ENCODE measurements at regions of chr1 and their contacts with region 1.

Region 1: DNA sequence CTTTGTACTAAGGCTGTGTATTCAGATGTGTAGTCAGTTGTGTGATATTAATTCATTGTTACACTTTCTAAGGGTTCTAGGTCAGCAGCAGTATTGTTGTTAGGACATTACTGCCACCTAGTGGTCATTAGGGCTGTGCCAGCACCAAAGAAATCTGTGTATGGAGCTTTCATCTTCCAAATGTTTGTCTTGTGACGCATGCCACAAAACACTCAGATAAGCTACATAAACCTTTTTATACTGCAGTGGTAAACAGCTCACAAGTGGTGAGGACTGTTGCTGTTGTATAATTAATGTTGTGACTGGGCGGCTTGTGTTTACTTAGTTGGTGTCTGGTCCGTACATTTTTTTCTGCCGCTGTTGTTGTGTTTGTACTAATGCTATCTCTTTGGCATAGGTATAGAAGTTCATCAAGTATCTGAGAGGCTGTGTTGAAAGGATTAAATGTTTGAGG is 51.7 kb downstream of the S1PR1 start:
- DNase-seq: no peak
- H3K4me3 ChIP-seq: no peak overlapping the region
- H3K27ac ChIP-seq: no peak overlapping the region
- H3K4me1 ChIP-seq: peaks cover 4 to 8% (median 4%) of the 10 kb centered on the region in 4 donors
- H3K27me3 ChIP-seq: no peaks in the 10 kb centered on the region
- CTCF ChIP-seq: peak; percentile 80 to 93 (median 88)
- EP300 ChIP-seq: no peak
- POLR2A ChIP-seq: no peak

Region 2: DNA sequence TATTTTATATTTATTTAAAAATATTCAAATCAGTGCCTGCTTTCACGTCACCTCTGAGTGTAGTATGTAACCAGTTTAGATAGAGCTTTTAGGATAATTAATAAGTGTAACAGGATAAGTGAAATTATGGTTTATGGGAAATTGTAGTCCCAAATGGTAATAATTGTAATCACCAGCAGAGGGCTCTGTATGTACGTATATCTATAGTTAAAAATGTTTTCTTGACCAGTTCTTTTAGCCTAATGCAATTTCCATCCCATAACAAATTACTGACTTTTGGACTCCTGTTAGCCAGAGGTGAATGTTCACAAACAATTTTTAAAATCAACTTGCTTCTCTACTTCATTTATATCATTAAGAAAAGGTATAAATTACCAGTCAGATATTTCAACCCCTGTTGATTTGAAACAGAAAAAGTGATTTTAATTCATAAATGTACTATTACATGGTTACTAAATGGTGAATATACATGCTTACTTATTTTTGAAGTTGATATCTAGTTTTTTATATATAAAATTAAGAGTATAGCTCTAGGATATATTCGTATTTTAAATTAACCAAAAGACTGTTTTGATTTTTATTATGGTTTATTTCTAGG is 367.3 kb before region 1 on chr1:
- intact Hi-C with region 1: loop called (anchors 5 kb)
- DNase-seq: no peak
- H3K4me3 ChIP-seq: no peak overlapping the region
- H3K27ac ChIP-seq: no peak overlapping the region
- H3K4me1 ChIP-seq: no peaks in the 10 kb centered on the region
- H3K27me3 ChIP-seq: no peaks in the 10 kb centered on the region
- CTCF ChIP-seq: peak; percentile 72 to 76 (median 75)
- EP300 ChIP-seq: no peak
- POLR2A ChIP-seq: no peak

Region 3: DNA sequence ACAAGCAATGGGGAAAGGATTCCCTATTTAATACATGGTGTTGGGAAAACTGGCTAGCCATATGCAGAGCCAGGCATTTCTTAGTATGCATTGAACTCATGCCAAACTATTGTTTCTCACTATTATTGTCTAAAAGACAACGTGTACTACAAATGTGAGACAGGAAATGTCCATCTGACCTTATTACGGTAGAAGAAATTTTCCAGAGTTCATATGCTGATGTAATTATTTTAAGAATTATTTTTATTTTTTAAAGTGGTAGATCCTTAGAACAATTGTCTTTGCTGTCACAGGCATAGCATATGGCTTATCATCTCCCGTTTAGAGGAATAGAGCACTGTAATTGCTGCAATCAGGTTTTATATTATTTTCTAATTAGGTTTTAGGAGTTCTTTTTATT is 126.9 kb before region 1 on chr1:
- intact Hi-C with region 1: no loop called
- DNase-seq: no peak
- H3K4me3 ChIP-seq: no peak overlapping the region
- H3K27ac ChIP-seq: peak overlapping the region; percentile 29 to 45 (median 38)
- H3K4me1 ChIP-seq: peaks cover 0 to 19% (median 0%) of the 10 kb centered on the region in 4 donors
- H3K27me3 ChIP-seq: no peaks in the 10 kb centered on the region
- CTCF ChIP-seq: no peak
- EP300 ChIP-seq: no peak
- POLR2A ChIP-seq: no peak

Region 4: GRCh38 chr1:101216623-101217022 is 71.9 kb before region 1 on chr1:
- intact Hi-C with region 1: no loop called
- DNase-seq: no peak
- H3K4me3 ChIP-seq: no peak overlapping the region
- H3K27ac ChIP-seq: no peak overlapping the region
- H3K4me1 ChIP-seq: peaks cover 0 to 10% (median 4%) of the 10 kb centered on the region in 4 donors
- H3K27me3 ChIP-seq: no peaks in the 10 kb centered on the region
- CTCF ChIP-seq: no peak
- EP300 ChIP-seq: no peak
- POLR2A ChIP-seq: no peak

Region 5: GRCh38 chr1:101667761-101668160 is 379.2 kb after region 1 on chr1:
- intact Hi-C with region 1: no loop called
- DNase-seq: no peak
- H3K4me3 ChIP-seq: no peak overlapping the region
- H3K27ac ChIP-seq: no peak overlapping the region
- H3K4me1 ChIP-seq: no peaks in the 10 kb centered on the region
- H3K27me3 ChIP-seq: no peaks in the 10 kb centered on the region
- CTCF ChIP-seq: no peak
- EP300 ChIP-seq: no peak
- POLR2A ChIP-seq: no peak